Activated CD4-positive, alpha-beta memory T cell treated with anti-CD3 and anti-CD28 coated beads for 36 hours (primary cell): ENCODE measurements at regions of chr1 and their contacts with region 1.

Region 1: GRCh38 chr1:44819608-44820327 is 11.4 kb downstream of the BTBD19 start:
- DNase-seq: peak; percentile 89
- H3K4me3 Mint-ChIP-seq: peak overlapping the region; percentile 89
- H3K27ac Mint-ChIP-seq: peak overlapping the region; percentile 99
- H3K4me1 Mint-ChIP-seq: peaks cover 42% of the 10 kb centered on the region
- H3K27me3 Mint-ChIP-seq: no peaks in the 10 kb centered on the region

Region 2: DNA sequence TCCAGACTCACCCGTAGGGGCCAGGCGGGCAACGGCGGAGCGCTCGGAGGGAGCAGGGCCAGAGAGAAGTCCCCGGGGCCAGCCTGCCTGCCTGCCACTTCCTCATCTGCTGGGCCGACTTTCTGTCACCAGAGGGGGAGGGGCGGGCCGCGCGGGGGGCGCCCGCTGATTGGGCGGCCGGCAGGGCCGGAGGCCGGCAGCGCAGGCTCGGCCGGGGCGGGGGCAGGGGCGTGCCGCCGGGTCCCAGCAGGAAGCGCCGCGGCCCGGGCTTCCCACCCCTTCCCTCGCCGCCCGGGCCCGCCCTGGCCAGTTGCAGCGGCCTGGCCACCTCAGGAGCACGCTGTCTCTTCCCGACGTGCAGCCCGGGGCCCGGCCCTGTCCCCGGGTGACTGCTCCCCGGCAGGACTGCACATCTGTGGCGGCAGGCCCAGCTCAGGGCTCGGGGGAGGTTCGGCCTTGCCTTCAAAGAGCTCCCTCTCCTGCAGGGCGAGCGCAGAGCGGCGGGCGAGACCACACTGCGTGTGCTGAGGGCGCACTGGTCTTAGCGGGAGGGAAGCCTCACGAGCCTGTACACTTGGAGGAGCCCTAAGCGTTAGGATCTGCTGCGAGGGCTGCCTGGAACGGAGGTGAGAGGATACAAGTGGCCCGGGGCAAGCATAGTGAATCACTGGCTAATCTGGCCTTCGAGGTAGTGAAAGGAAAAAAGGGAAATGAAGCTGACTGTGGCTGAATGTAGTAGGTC is 1451.7 kb before region 1 on chr1 and contains the start of gene ELOVL1:
- CTCF ChIA-PET with region 1: no interaction called
- POLR2A ChIA-PET with region 1: no interaction called
- intact Hi-C with region 1: loop called (anchors 10 kb)
- DNase-seq: peak; percentile 94
- H3K4me3 Mint-ChIP-seq: peak within 1 kb of the TSS; percentile 93
- H3K27ac Mint-ChIP-seq: peak within 1 kb of the TSS; percentile 91
- H3K4me1 Mint-ChIP-seq: peaks cover 29% of the 10 kb centered on the region
- H3K27me3 Mint-ChIP-seq: no peaks in the 10 kb centered on the region
- total RNA-seq, gene ELOVL1: 63.4 to 64.7 TPM

Region 3: DNA sequence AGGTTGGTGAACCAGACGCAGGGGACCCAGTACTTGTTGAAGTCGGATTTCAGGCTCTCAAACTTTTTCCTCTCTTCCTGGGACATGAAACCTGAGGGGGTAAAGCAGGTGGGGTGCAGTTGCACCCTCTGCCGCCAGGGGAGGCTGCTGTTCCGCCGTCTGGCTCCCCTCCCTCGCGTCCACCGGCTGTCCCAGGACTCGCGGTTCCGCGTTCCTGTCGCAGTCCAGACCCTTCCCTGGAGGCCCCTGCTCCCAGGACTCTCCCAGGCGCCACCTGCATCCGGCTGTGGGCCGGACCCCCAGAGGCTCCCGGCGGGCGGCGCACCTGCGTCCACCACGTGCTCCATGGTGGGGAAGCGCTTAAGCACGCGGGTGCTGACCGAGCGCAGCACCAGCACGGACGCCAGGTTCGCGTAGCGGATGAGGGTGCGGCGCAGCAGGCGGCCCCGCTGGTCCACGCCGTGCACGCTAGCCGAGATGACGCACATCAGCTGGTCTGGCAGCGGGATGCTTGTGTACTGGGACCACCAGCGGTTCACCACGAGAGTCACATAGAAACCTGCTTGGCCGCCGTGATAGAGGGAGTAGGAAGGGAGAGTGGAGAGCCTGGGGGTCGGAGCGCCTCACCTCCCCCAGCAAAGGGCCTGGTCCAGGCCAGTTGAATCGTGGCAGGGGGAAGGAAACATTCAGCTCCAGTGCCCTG is 33.5 kb before region 1 on chr1:
- CTCF ChIA-PET with region 1: interaction called, 7 read pairs
- POLR2A ChIA-PET with region 1: interaction called, 16 read pairs
- intact Hi-C with region 1: loop called (anchors 5 kb)
- DNase-seq: peak; percentile 83
- H3K4me3 Mint-ChIP-seq: peak overlapping the region; percentile 73
- H3K27ac Mint-ChIP-seq: peak overlapping the region; percentile 31
- H3K4me1 Mint-ChIP-seq: peaks cover 31% of the 10 kb centered on the region
- H3K27me3 Mint-ChIP-seq: no peaks in the 10 kb centered on the region

Region 4: GRCh38 chr1:44792783-44793714 is 26.7 kb before region 1 on chr1:
- CTCF ChIA-PET with region 1: interaction called, 13 read pairs
- POLR2A ChIA-PET with region 1: interaction called, 404 read pairs
- intact Hi-C with region 1: loop called (anchors 2 kb)
- DNase-seq: peak; percentile 1
- H3K4me3 Mint-ChIP-seq: no peak overlapping the region
- H3K27ac Mint-ChIP-seq: no peak overlapping the region
- H3K4me1 Mint-ChIP-seq: no peaks in the 10 kb centered on the region
- H3K27me3 Mint-ChIP-seq: no peaks in the 10 kb centered on the region

Region 5: DNA sequence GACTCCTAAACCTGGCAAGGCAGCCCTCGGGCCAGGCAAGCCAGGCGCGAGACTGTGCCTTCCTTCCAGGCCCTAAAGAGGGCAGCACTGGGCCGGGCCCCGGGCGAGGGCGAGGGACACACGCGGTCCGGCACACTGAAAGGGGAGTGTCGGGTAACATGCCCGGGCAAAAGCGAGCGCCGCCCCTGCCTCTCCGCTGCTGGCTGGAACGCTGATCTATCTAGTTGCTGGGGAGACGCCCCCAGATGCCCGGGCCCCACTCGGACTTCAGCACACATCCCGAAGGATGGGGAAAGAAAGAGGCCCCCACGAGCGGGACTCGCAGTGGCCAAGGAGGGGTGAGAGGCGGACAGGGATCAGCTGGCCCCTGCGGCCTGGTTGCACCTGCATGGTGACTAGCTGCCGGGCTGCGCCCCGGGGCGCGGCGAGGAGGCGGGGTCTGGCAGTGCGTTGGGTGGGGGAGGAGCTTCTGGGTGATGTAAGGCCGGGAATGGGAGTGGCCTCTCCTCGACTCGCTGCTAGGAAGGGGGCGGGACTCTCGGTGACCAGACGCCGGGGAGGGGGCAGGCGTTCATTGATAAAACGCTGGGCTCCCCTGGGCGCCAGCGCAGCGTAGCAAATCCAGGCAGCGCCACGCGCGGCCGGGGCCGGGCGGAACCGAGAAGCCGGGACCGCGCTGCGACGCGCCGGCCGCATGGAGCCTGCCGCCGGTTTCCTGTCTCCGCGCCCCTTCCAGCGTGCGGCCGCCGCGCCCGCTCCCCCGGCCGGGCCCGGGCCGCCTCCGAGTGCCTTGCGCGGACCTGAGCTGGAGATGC is 19.8 kb before region 1 on chr1 and contains the start of gene PLK3:
- CTCF ChIA-PET with region 1: interaction called, 39 read pairs
- POLR2A ChIA-PET with region 1: interaction called, 404 read pairs
- intact Hi-C with region 1: loop called (anchors 1 kb)
- DNase-seq: peak; percentile 99
- H3K4me3 Mint-ChIP-seq: peak within 1 kb of the TSS; percentile 93
- H3K27ac Mint-ChIP-seq: peak within 1 kb of the TSS; percentile 95
- H3K4me1 Mint-ChIP-seq: peaks cover 34% of the 10 kb centered on the region
- H3K27me3 Mint-ChIP-seq: no peaks in the 10 kb centered on the region
- total RNA-seq, gene PLK3: 80.2 to 87.9 TPM

Region 6: DNA sequence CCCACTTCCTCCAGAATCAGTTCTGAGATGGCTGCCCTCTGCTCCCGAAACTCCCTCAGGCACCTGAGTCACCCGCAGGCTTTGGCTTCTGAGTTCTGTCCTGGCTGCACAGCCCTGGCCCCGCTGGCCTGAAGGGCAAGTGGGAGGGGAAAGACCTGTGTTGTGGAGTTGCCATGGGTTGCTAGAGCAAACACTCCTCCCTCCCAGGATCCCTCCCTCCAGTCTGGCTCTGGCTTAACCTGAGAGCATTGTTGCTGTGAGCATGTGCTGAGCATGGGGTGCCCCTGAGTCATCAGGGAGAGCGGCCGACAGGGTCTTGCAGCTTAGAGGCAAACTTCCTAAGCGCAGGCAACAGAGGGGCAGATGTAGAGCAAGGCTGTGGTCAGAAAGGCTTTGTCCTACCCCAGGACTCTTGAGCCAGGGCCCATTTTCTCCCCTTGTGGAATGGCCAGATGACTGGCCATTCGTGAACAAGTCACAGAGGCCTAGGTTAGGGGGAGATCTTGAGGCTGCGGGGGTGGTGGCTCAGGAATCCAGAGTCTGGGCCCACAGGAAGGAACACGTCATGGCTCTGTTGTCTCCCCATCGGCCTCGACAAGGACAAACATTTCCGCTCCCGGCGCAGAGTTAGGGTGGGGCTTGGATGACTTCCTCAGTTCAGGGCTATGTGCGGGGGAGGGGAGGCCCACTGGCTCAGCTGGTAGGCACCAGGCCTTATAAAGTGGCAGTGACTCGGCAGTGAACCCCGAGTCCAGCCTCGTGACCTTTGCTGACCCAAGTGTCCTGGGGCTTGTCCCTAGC is 12.3 kb before region 1 on chr1 and contains the start of gene DYNLT4:
- CTCF ChIA-PET with region 1: interaction called, 40 read pairs
- POLR2A ChIA-PET with region 1: interaction called, 404 read pairs
- intact Hi-C with region 1: loop called (anchors 1 kb)
- DNase-seq: peak; percentile 95
- H3K4me3 Mint-ChIP-seq: peak within 1 kb of the TSS; percentile 73
- H3K27ac Mint-ChIP-seq: peak within 1 kb of the TSS; percentile 98
- H3K4me1 Mint-ChIP-seq: peaks cover 90% of the 10 kb centered on the region
- H3K27me3 Mint-ChIP-seq: no peaks in the 10 kb centered on the region
- total RNA-seq, gene DYNLT4: 0.40 to 0.41 TPM

Region 7: GRCh38 chr1:44835738-44836675 is 16.2 kb after region 1 on chr1:
- CTCF ChIA-PET with region 1: interaction called, 21 read pairs
- POLR2A ChIA-PET with region 1: interaction called, 4 read pairs
- intact Hi-C with region 1: no loop called
- DNase-seq: peak; percentile 94
- H3K4me3 Mint-ChIP-seq: no peak overlapping the region
- H3K27ac Mint-ChIP-seq: no peak overlapping the region
- H3K4me1 Mint-ChIP-seq: peaks cover 8% of the 10 kb centered on the region
- H3K27me3 Mint-ChIP-seq: peaks cover 6% of the 10 kb centered on the region